ENCODE measurements at regions of chr19 and their contacts with region 1.

Region 1: DNA sequence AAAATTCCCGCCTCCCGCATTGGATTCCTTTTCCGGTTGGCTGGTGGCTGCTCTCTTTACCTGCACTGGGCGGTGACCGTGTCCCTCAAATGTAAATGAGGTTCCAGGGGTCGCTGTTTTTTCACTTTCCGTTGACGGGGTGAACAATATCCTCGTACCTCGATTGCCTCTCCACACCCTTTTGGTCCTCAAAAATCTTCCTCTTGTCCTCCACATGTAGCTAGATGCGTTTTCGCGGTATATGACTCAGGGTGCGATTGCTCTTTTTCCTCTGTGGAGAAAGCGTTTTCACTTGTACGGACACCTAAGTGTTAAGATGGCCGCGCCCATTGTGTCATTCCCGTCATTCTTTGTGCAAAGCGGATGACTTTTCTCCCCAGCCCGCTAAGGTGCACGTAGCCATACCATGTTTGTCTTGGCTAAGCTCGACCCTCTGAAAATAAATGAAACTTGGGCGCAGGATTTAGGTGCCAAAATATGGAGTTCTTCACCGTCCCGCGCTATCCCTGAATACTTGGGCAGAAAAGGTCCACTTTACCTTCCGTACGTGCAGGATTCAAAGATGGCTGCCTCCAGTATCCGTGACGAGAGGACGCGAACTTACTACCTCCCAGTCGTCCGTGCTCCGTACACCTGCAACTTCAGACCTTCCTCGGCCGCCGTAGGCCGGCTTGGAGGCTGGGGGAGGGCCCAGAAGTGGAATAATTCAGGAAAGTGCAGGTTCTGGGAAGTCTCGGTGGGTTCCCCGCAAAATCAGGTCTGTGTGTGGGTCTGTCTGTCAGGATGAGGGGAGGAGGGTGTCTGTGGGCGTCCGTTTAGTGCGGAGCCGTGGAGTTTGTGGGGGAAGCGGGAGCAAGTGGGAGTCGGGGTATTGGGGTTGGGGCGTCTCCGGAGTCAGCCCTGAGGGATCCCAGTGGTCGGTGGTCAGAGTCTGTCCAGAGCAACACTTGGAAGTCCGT is at the start of gene ZNF613:
- DNase-seq: peak; percentile 45
- H3K4me3 ChIP-seq: peak within 1 kb of the TSS; percentile 77 to 92 (median 84)
- H3K27ac ChIP-seq: peak within 1 kb of the TSS; percentile 81 to 91 (median 90)
- H3K4me1 ChIP-seq: peaks cover 6 to 16% (median 6%) of the 10 kb centered on the region in 3 donors
- H3K27me3 ChIP-seq: no peaks in the 10 kb centered on the region
- CTCF ChIP-seq: peak in 2 of 6 experiments; percentile 12 to 26
- POLR2A ChIP-seq: no peak
- total RNA-seq, gene ZNF613: 2.9 to 12.0 (median 7.6) TPM

Region 2: DNA sequence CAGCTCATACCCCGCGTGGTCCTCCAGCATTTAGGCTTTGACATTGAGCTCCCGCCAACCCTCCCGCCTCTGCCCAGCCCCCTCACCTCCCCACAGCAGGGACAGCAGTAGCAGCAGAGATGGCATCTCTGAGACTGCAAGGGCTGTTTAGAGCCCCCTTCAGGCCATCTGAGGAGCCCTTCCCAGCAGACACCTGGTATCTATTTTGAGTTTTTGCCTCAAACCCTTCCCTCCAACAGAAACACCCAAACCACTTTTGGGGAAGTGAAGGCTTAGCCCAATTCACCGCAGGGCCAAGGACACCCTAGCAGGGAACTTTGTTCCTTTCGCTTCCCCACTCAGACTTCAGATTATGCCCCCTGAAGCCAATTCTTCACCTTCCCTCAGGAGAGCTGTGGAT is 362.3 kb before region 1 on chr19:
- intact Hi-C with region 1: no loop called
- DNase-seq: no peak
- H3K4me3 ChIP-seq: no peak overlapping the region
- H3K27ac ChIP-seq: no peak overlapping the region
- H3K4me1 ChIP-seq: no peaks in the 10 kb centered on the region
- H3K27me3 ChIP-seq: peaks cover 0 to 70% (median 2%) of the 10 kb centered on the region in 4 donors
- CTCF ChIP-seq: no peak
- POLR2A ChIP-seq: no peak

Region 3: DNA sequence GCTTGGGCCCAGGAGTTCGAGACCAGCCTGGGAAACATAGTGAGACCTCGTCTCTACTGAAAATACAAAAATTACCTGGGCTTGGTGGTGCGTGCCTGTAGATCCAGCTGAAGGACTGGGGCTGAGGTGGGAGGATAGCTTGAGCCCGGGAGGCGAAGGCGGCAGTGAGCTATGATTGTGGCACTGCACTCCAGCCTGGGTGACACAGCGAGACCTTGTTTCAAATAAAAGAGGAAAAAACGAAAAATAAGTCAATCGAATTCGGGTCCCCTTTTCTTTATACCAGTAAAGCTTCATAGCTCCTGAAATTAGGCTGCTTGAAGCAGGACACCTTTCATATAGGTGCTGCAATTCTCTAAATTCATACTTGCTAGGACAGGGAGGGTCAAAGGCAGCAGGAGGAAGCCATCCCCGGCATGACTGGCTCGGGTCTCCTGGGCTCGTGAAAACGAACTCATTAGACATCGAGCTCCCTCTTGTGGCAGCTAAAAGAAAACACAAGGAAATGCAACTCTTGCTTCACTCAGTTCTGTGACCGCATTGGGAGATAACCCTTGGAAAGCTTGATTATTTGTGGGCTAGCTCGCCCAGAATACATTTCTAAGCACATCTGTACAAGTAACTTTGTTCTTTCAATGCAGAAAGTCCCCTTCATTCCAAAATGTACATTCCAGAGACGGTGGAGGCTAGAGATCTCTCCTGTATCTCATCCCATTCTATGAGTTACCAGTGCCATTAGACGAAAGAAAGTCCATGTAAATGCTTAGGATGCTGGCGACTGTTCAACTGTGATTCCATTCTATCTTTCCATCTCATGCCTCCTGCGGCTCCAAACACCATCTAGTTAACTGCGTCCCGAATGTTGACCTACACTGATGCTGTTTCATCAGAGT is 149.2 kb before region 1 on chr19:
- intact Hi-C with region 1: no loop called
- DNase-seq: no peak
- H3K4me3 ChIP-seq: no peak overlapping the region
- H3K27ac ChIP-seq: no peak overlapping the region
- H3K4me1 ChIP-seq: peaks cover 0 to 6% (median 0%) of the 10 kb centered on the region in 3 donors
- H3K27me3 ChIP-seq: peaks cover 0 to 73% (median 0%) of the 10 kb centered on the region in 4 donors
- CTCF ChIP-seq: peak; percentile 50 to 76 (median 68)
- POLR2A ChIP-seq: no peak

Region 4: GRCh38 chr19:51986309-51987291 is 59.5 kb after region 1 on chr19 and contains the start of gene ZNF350:
- intact Hi-C with region 1: loop called (anchors 10 kb)
- DNase-seq: peak; percentile 72
- H3K4me3 ChIP-seq: peak within 1 kb of the TSS; percentile 71 to 94 (median 80)
- H3K27ac ChIP-seq: peak within 1 kb of the TSS; percentile 81 to 88 (median 84)
- H3K4me1 ChIP-seq: peaks cover 6 to 21% (median 11%) of the 10 kb centered on the region in 3 donors
- H3K27me3 ChIP-seq: no peaks in the 10 kb centered on the region
- CTCF ChIP-seq: peak in 1 of 6 experiments; percentile 18
- POLR2A ChIP-seq: peak in 1 of 4 donors; percentile 26
- total RNA-seq, gene ZNF350: 2.9 to 12.6 (median 6.6) TPM

Measured in esophagus squamous epithelium (tissue), 5 donors.